ENCODE measurements at regions of chr11 and their contacts with region 1.

Region 1: DNA sequence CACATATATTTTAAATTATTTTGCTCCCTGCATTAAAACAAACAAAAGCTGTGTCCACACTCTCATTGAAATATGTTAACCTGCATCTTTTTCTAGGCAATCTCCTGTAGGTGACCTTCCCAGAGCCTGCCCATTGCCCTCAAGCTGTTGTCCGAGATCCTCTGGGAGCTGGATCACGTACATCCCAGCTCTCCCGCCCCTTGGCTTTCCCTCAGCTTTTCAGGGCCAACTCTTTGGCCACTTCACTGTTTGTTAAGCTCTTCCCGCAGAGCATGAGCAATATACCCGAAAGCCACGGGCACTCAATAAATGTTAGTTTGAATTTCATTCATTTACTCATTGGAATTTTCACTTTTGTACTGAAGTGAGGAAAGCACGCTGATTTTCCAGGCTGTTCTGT is 32.2 kb downstream of the ELMOD1 start:
- DNase-seq: no peak
- ATAC-seq: no peak
- H3K4me3 ChIP-seq: no peak overlapping the region
- H3K4me3 Mint-ChIP-seq: no peak overlapping the region
- H3K27ac ChIP-seq: no peak overlapping the region
- H3K27ac Mint-ChIP-seq: no peak overlapping the region
- H3K4me1 ChIP-seq: no peaks in the 10 kb centered on the region
- H3K4me1 Mint-ChIP-seq: peaks cover 0 to 10% (median 0%) of the 10 kb centered on the region in 3 donors
- H3K27me3 ChIP-seq: peaks cover 4 to 7% of the 10 kb centered on the region in 2 experiments
- H3K27me3 Mint-ChIP-seq: peaks cover 50 to 52% of the 10 kb centered on the region in 2 donors

Region 2: DNA sequence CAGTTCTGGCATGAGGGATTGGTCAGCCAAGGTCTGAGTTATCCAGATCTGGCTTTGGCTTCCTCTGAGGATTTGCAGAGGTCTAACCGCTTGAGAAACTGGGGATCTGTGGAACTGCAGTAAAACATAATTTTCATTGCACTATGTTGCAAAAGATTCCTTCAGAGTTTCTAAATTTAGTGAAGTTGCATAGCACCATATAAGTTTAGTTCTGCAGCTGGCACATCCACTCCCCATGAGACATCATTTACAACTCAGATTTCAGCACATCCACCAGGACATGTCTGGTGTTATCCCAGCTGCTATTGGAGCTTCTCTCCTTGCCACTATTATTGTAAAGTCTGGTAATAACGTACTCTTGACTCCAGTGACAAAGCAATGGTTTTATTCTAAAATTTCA is 347.1 kb before region 1 on chr11:
- CTCF ChIA-PET with region 1: no interaction called
- POLR2A ChIA-PET with region 1: no interaction called
- DNase-seq: no peak
- ATAC-seq: no peak
- H3K4me3 ChIP-seq: no peak overlapping the region
- H3K4me3 Mint-ChIP-seq: no peak overlapping the region
- H3K27ac ChIP-seq: no peak overlapping the region
- H3K27ac Mint-ChIP-seq: no peak overlapping the region
- H3K4me1 ChIP-seq: no peaks in the 10 kb centered on the region
- H3K4me1 Mint-ChIP-seq: no peaks in the 10 kb centered on the region
- H3K27me3 ChIP-seq: no peaks in the 10 kb centered on the region
- H3K27me3 Mint-ChIP-seq: no peaks in the 10 kb centered on the region

Region 3: GRCh38 chr11:107573438-107573837 is 49.7 kb before region 1 on chr11:
- CTCF ChIA-PET with region 1: no interaction called
- POLR2A ChIA-PET with region 1: no interaction called
- DNase-seq: no peak
- ATAC-seq: no peak
- H3K4me3 ChIP-seq: no peak overlapping the region
- H3K4me3 Mint-ChIP-seq: no peak overlapping the region
- H3K27ac ChIP-seq: no peak overlapping the region
- H3K27ac Mint-ChIP-seq: no peak overlapping the region
- H3K4me1 ChIP-seq: no peaks in the 10 kb centered on the region
- H3K4me1 Mint-ChIP-seq: no peaks in the 10 kb centered on the region
- H3K27me3 ChIP-seq: peaks cover 0 to 8% of the 10 kb centered on the region in 2 experiments
- H3K27me3 Mint-ChIP-seq: peaks cover 4% of the 10 kb centered on the region in 2 donors

Region 4: GRCh38 chr11:107776062-107776461 is 152.9 kb after region 1 on chr11:
- CTCF ChIA-PET with region 1: no interaction called
- POLR2A ChIA-PET with region 1: interaction called in 1 of 2 experiments, 18 read pairs
- DNase-seq: no peak
- ATAC-seq: no peak
- H3K4me3 ChIP-seq: no peak overlapping the region
- H3K4me3 Mint-ChIP-seq: no peak overlapping the region
- H3K27ac ChIP-seq: no peak overlapping the region
- H3K27ac Mint-ChIP-seq: no peak overlapping the region
- H3K4me1 ChIP-seq: no peaks in the 10 kb centered on the region
- H3K4me1 Mint-ChIP-seq: no peaks in the 10 kb centered on the region
- H3K27me3 ChIP-seq: no peaks in the 10 kb centered on the region
- H3K27me3 Mint-ChIP-seq: peaks cover 6 to 17% of the 10 kb centered on the region in 2 donors

Measured in T-cell (primary cell).